ENCODE measurements at regions of chr14 and their contacts with region 1.

Region 1: GRCh38 chr14:22653012-22653621 is 9.0 kb upstream of the OR6J1 start:
- DNase-seq: no peak
- ATAC-seq: peak; percentile 53

Region 2: DNA sequence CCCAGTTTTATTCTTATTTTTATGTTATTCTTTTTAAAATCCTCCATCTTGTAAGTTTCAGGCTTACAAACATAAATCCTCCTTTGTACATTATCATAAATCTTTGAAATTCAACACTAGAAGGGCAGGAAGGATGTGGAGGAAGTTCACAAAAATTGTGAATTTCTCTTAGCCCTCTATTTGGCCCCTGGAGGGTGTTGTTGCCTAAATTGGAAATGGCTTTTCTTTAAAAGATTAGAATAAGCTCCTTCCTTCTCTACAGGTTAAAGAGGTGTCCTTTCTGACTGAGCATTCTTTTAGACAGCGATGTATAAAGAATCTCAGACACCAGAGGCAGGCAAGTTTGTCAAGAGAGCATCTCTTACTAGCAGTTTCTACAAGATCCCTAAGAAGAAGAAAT is 587.8 kb before region 1 on chr14:
- intact Hi-C with region 1: no loop called
- DNase-seq: no peak
- ATAC-seq: no peak

Region 3: GRCh38 chr14:22715186-22715812 is 62.2 kb after region 1 on chr14:
- intact Hi-C with region 1: loop called (anchors 10 kb)
- DNase-seq: no peak
- ATAC-seq: no peak

Measured in Right ventricle myocardium inferior (tissue), 1 donor.